ENCODE measurements at regions of chr12 and their contacts with region 1.

Region 1: DNA sequence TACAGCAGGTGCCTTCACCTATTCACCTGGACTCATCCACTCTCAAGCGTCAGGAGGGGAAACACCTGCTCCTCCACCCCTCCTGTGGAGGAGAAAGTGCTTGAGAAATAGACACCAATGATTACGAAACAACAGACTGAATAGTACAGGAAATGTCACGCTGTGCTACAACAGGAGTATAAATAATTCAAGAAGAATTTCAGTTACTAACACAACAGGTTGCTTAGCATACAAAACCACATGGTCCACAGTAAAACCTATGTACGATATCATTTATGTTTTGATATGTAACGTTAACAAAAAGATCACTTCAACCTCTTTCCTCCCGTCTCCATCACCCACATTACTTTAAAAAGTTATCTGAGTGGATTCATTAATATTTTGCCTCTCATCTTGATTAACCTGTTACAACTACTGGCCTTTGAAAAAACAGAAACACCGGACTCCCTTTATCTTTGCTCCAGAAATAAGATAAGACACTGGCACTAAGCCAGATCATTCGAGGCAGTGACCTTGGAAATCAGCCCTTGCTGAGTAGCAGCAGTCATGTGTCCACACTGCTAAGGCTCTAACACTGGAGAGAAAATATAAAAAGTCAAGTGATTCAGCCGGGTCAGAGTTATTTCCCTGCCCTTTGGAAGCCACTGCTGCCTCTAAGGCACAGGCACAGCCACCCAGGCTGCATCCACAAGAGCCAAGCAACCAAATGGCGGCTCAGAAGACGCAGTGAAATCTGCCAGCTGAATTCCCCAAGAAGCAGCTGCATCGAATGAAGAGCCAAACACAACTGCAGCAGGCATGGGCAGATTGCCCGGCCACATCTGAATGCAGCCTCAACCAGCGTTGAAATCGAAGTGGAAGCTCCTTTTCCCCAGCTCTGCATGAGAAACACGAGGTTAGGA is 40.9 kb downstream of the NT5DC3 start:
- DNase-seq: peak; percentile 85

Region 2: GRCh38 chr12:103860903-103861763 is 61.0 kb after region 1 on chr12:
- intact Hi-C with region 1: loop called in 1 of 2 experiments (anchors 10 kb)
- DNase-seq: no peak

Region 3: DNA sequence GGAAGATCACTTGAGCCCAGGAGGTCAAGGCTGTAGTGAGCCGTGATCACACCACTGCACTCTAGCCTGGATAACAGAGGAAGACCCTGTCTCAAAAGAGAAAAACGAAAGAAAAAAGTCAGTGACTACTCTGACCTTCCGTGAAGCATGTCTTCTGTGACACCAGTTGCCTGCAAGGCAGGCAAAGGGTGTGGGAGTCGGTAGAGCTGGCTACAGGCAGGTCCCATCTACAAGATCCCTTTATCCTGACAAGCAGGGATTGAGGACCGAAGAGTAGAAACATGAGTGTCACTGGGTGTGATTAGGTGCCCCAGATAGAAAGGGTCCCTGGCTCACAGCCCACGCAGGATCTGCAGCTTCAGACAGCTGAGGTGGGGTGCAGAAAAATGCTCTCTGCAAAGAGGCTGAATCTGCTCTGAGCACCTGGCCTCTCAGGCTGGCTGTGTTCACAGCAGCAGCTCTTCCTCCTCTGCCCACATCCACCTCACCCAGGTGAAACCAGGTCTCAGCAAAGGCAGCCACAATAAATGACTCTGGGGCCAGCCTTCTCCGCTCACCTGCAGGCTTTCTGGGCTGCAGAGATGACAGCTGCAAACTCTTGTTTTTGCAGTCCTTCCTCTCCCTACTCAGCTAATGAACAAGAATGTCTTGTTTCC is 101.5 kb after region 1 on chr12:
- intact Hi-C with region 1: no loop called
- DNase-seq: no peak

Region 4: GRCh38 chr12:104358347-104359003 is 558.4 kb after region 1 on chr12:
- intact Hi-C with region 1: no loop called
- DNase-seq: peak; percentile 88